GM12878 (cell line): ENCODE measurements at regions of chr11 and their contacts with region 1.

Region 1: DNA sequence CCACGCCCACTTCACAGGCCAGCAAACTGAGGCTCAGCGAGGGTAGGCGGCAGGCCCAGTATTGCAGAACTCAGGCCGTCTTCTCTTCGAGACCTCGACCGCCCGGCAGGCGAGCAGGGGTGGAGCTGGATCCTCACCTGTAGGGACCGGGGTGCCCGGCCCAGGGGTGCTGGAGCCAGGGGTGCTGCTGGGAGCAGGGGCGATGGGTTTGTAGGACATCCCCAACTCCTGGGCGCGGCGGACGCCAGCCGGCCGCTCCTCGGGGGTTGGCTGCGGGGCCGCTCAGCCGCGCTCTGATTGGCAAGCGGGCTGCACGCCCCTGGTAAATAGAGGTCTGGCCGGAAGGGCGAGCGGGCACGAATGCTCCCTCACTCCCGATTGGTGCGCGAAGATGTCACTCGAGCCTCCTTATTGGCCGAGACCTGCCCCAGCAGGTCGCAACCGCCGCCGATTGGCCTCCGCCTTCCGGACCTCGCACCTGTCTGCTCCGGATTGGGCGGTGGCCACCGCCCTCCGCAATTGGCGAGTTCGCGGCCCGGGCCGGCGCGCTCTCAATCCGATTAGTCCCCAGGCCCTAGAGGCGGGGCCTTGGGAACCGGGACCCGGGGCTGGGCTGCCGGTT is at the start of gene CDK2AP2:
- DNase-seq: peak; percentile 99
- ATAC-seq: peak; percentile 86
- H3K4me3 ChIP-seq: peak within 1 kb of the TSS; percentile 82
- H3K27ac ChIP-seq: peak within 1 kb of the TSS; percentile 94
- H3K4me1 ChIP-seq: peaks cover 27% of the 10 kb centered on the region
- H3K27me3 ChIP-seq: no peaks in the 10 kb centered on the region; a peak in 1 of 4 replicates
- CTCF ChIP-seq: no peak
- EP300 ChIP-seq: no peak
- POLR2A ChIP-seq: peak; percentile 86
- RAD21 ChIP-seq: no peak
- polyA plus RNA-seq, gene CDK2AP2: 8.0 to 18.0 TPM

Region 2: DNA sequence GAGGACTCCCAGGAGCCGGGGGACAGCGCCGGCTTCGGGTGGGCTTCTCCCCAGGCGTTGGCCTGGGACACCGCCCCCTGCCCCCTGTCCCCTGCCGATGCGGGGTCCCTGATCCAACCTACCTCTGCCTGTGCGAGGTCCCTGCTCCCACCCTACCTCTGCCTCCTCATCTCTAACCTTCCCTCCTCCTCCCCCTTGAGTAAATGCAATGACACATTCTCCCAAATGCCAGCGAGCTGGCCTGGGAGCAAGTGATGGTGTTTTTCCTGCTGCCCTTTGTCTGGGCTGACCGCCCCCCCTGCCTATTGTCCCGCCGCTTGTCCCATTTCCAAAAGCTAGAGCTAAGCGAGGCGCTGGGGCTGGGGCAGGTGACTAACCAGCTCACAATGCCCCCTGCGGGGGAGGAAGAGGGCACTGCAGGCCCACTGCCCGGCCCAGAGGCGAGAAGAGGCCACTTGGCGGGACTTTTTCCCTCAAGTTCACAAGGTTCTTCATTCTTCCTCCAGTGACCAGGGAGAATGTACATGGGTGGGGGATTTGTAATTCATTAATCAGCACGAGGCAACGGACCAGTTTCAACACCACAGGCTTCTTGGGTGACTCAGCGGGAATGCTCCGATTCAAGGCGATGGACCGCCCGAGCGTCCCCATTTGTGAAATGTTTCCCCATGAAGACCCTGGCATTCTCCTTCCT is 133.9 kb before region 1 on chr11:
- CTCF ChIA-PET with region 1: no interaction called
- POLR2A ChIA-PET with region 1: no interaction called
- RAD21 ChIA-PET with region 1: no interaction called
- SMC1A ChIA-PET with region 1: no interaction called
- in situ Hi-C with region 1: no loop called
- intact Hi-C with region 1: no loop called
- DNase-seq: no peak
- ATAC-seq: peak; percentile 58
- H3K4me3 ChIP-seq: no peak overlapping the region
- H3K27ac ChIP-seq: no peak overlapping the region
- H3K4me1 ChIP-seq: peaks cover 18% of the 10 kb centered on the region
- H3K27me3 ChIP-seq: peaks cover 2 to 4% of the 10 kb centered on the region in 2 experiments; a peak in 3 of 4 replicates
- CTCF ChIP-seq: peak; percentile 52 to 65 (median 56)
- EP300 ChIP-seq: no peak
- POLR2A ChIP-seq: no peak
- RAD21 ChIP-seq: peak; percentile 36; the same call in 1 of the 2 replicates

Region 3: GRCh38 chr11:67391304-67392132 is 116.5 kb before region 1 on chr11 and contains the start of gene RAD9A:
- CTCF ChIA-PET with region 1: interaction called, 4 read pairs
- POLR2A ChIA-PET with region 1: no interaction called
- RAD21 ChIA-PET with region 1: interaction called, 5 read pairs
- SMC1A ChIA-PET with region 1: interaction called, 5 read pairs
- in situ Hi-C with region 1: no loop called
- intact Hi-C with region 1: loop called (anchors 1 kb)
- DNase-seq: no peak
- ATAC-seq: peak; percentile 90
- H3K4me3 ChIP-seq: peak within 1 kb of the TSS; percentile 97
- H3K27ac ChIP-seq: peak within 1 kb of the TSS; percentile 78
- H3K4me1 ChIP-seq: peaks cover 7% of the 10 kb centered on the region
- H3K27me3 ChIP-seq: no peaks in the 10 kb centered on the region
- CTCF ChIP-seq: no peak
- EP300 ChIP-seq: peak; percentile 22 to 64; a peak in 2 of 4 replicates
- POLR2A ChIP-seq: peak; percentile 83
- RAD21 ChIP-seq: no peak
- polyA plus RNA-seq, gene RAD9A: 1.1 to 3.6 TPM

Region 4: GRCh38 chr11:67482825-67483798 is 24.9 kb before region 1 on chr11 and contains the start of gene AIP:
- CTCF ChIA-PET with region 1: interaction called, 30 read pairs
- POLR2A ChIA-PET with region 1: interaction called, 14 read pairs
- RAD21 ChIA-PET with region 1: interaction called, 13 read pairs
- SMC1A ChIA-PET with region 1: interaction called, 23 read pairs
- in situ Hi-C with region 1: no loop called
- intact Hi-C with region 1: loop called (anchors 2 kb)
- DNase-seq: peak; percentile 97
- ATAC-seq: peak; percentile 77
- H3K4me3 ChIP-seq: peak within 1 kb of the TSS; percentile 67
- H3K27ac ChIP-seq: peak within 1 kb of the TSS; percentile 70
- H3K4me1 ChIP-seq: peaks cover 43% of the 10 kb centered on the region
- H3K27me3 ChIP-seq: no peaks in the 10 kb centered on the region
- CTCF ChIP-seq: peak in 1 of 3 experiments; percentile 19; a peak in 1 of 6 replicates
- EP300 ChIP-seq: no peak
- POLR2A ChIP-seq: peak; percentile 78
- RAD21 ChIP-seq: no peak
- polyA plus RNA-seq, gene AIP: 12.6 to 29.7 TPM

Region 5: GRCh38 chr11:67523556-67524479 is 15.8 kb after region 1 on chr11:
- CTCF ChIA-PET with region 1: no interaction called
- POLR2A ChIA-PET with region 1: no interaction called
- RAD21 ChIA-PET with region 1: no interaction called
- SMC1A ChIA-PET with region 1: no interaction called
- in situ Hi-C with region 1: no loop called
- intact Hi-C with region 1: no loop called
- DNase-seq: no peak
- ATAC-seq: no peak
- H3K4me3 ChIP-seq: no peak overlapping the region
- H3K27ac ChIP-seq: no peak overlapping the region
- H3K4me1 ChIP-seq: no peaks in the 10 kb centered on the region
- H3K27me3 ChIP-seq: no peaks in the 10 kb centered on the region
- CTCF ChIP-seq: no peak
- EP300 ChIP-seq: no peak
- POLR2A ChIP-seq: no peak
- RAD21 ChIP-seq: no peak

Region 6: DNA sequence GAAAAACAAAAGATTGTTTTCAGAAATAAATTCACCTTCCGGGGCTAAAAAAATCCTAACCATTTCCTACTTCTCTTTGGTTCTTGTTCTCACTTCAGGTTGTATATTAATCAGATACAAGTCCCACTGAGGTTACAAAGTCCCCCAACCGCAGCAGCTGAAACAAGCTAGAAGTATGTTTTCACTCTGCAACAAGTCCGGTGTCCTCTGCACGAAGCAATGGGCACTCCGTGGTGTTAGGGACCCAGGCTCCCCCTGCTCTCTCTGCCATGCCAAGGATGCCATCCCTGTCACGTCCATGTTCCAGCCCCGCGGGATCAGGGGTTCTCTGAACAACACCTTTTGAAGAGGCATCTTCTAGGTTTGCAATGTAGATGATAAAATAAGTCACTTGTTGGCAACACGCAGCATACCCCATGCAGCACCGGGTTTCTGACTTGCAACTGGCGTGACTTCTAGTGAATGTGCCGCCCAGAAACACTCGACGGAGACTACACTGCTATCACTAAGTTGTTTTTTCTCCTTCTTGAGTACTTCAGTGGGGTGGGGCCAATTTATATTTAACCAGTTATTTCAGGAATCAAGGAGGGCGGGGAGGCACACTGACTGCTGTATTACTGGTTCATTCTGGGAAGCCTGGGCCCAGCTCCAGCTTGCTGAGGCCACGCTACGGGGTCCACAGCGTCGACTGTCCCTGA is 50.3 kb after region 1 on chr11:
- CTCF ChIA-PET with region 1: no interaction called
- POLR2A ChIA-PET with region 1: no interaction called
- RAD21 ChIA-PET with region 1: no interaction called
- SMC1A ChIA-PET with region 1: no interaction called
- in situ Hi-C with region 1: no loop called
- intact Hi-C with region 1: loop called (anchors 5 kb)
- DNase-seq: peak; percentile 61
- ATAC-seq: peak; percentile 90
- H3K4me3 ChIP-seq: peak overlapping the region; percentile 29; the same call in 1 of the 2 replicates
- H3K27ac ChIP-seq: peak overlapping the region; percentile 38; the same call in 1 of the 2 replicates
- H3K4me1 ChIP-seq: peaks cover 32% of the 10 kb centered on the region
- H3K27me3 ChIP-seq: no peaks in the 10 kb centered on the region
- CTCF ChIP-seq: no peak
- EP300 ChIP-seq: peak; percentile 43 to 85; a peak in 3 of 4 replicates
- POLR2A ChIP-seq: no peak
- RAD21 ChIP-seq: no peak

Region 7: DNA sequence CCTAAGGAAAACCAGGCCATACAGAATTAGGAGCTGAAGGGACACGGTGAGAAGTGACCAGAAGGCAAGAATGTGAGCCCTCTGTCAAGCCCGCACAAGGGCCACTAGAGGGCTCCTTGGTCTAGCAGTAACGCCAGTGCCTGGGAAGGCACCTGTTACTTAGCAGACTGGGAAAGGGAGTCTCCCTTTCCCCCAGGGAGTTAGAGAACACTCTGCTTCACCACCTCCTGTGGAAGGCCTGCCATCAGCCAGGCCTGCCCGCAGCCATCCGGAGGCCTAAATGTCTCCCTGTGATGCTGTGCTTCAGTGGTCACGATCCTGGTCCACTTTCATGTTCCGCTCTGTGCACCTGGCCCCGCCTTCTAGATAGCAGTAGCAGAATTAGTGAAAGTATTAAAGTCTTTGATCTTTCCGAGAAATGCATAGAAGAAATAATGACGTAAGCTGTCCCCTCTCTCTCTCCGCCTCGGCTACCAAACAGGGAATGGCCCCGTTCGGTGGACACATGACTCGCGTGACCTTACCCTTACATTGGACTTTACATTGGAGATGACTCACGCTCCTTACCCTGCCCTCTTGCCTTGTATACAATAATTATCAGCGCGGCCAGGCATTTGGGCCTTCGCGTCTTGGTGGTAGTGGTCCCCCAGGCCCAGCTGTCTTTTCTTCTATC is 64.9 kb after region 1 on chr11:
- CTCF ChIA-PET with region 1: no interaction called
- POLR2A ChIA-PET with region 1: no interaction called
- RAD21 ChIA-PET with region 1: no interaction called
- SMC1A ChIA-PET with region 1: interaction called, 3 read pairs
- in situ Hi-C with region 1: no loop called
- intact Hi-C with region 1: loop called (anchors 5 kb)
- DNase-seq: no peak
- ATAC-seq: peak; percentile 77
- H3K4me3 ChIP-seq: no peak overlapping the region
- H3K27ac ChIP-seq: no peak overlapping the region
- H3K4me1 ChIP-seq: peaks cover 5% of the 10 kb centered on the region
- H3K27me3 ChIP-seq: no peaks in the 10 kb centered on the region; a peak in 1 of 4 replicates
- CTCF ChIP-seq: peak; percentile 56 to 85 (median 62)
- EP300 ChIP-seq: no peak
- POLR2A ChIP-seq: no peak
- RAD21 ChIP-seq: peak; percentile 73